Activated CD4-positive, alpha-beta T cell treated with anti-CD3 and anti-CD28 coated beads for 36 hours (primary cell): ENCODE measurements at regions of chr11 and their contacts with region 1.

Region 1: DNA sequence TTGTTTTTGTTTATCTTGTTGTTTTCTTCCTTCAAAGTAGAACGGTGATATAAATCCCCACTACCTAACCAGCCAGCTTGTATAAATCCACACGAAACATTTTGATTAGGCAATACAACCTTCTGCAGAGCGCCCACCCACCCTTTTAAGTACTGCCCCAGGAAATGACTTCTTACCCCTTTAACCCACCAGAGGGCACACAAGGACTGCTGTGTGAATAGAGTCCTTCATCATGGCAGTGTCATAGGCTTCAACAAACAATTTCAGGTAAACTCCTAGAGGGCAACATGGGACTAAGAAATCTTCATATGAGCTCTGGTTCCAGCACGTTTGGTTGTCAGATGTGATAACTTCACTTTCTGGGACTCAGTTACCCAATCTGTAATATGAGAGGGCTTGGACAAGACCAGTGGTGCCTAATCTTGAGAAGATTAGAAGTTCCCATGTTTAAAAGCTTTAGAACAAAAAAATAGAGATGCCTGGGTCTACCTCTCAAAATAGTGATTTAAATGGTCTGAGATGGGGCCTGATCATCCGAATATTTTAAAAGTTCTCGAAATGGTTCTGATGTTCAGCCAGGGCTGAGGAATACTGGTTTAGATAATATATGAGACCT is 56.1 kb downstream of the PIWIL4 start:
- DNase-seq: peak; percentile 70
- ATAC-seq: peak; percentile 93
- H3K4me3 Mint-ChIP-seq: no peak overlapping the region
- H3K27ac Mint-ChIP-seq: no peak overlapping the region
- H3K4me1 Mint-ChIP-seq: peaks cover 2% of the 10 kb centered on the region
- H3K27me3 Mint-ChIP-seq: peaks cover 2% of the 10 kb centered on the region

Region 2: GRCh38 chr11:94613120-94613519 is 10.1 kb before region 1 on chr11:
- CTCF ChIA-PET with region 1: interaction called, 12 read pairs
- POLR2A ChIA-PET with region 1: no interaction called
- intact Hi-C with region 1: no loop called
- DNase-seq: no peak
- ATAC-seq: no peak
- H3K4me3 Mint-ChIP-seq: no peak overlapping the region
- H3K27ac Mint-ChIP-seq: no peak overlapping the region
- H3K4me1 Mint-ChIP-seq: no peaks in the 10 kb centered on the region
- H3K27me3 Mint-ChIP-seq: no peaks in the 10 kb centered on the region

Region 3: DNA sequence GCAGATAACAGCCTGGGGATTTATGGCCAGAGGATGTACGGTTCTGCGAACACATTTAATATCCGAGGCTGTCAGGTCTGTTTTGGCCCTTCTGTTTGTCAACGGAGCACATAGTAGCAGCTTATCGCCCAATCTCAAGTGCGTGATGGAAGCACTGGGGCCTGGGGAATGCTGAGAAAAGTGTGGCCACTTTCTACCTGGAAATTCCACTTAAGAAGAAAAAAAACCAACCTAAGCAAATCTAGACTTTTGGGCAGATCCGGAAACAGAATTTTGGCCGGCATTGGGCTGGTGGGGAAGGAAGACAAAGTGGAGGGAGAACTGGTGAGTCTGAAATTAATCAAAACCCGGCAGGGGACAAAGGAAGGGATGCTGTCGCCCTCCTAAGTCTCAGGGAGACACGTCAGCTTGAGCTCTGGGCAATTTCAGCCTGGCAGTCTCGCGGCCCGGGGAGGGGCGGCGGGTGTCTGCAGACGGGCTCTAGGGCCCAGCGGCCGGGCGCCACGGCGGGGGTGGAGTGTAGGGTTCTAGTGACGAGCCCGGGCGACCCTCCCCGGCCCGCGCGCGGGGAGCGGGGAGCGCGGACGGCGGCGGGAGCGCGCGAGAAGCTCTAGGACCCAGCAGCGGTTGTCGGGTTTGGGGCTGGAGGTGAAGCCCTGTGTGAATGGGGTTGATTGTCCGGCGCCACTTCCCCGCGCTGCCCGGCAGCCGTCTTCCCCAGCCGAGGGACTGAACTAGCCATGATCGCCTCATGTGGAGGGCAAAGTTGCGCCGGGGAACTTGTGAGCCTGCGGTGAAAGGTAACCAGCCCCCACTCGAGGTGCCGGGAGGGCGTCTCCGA is 144.8 kb after region 1 on chr11 and contains the start of gene AMOTL1:
- CTCF ChIA-PET with region 1: no interaction called
- POLR2A ChIA-PET with region 1: no interaction called
- intact Hi-C with region 1: loop called in 1 of 2 experiments (anchors 5 kb)
- DNase-seq: peak; percentile 69
- ATAC-seq: peak; percentile 73
- H3K4me3 Mint-ChIP-seq: peak within 1 kb of the TSS; percentile 65
- H3K27ac Mint-ChIP-seq: no peak within 1 kb of the TSS
- H3K4me1 Mint-ChIP-seq: peaks cover 11% of the 10 kb centered on the region
- H3K27me3 Mint-ChIP-seq: peaks cover 31% of the 10 kb centered on the region
- total RNA-seq, gene AMOTL1: 1.8 to 2.3 TPM

Region 4: GRCh38 chr11:94973099-94973968 is 350.1 kb after region 1 on chr11 and contains the starts of genes CWC15 and KDM4D:
- CTCF ChIA-PET with region 1: no interaction called
- POLR2A ChIA-PET with region 1: no interaction called
- intact Hi-C with region 1: loop called in 1 of 2 experiments (anchors 2 kb)
- DNase-seq: peak; percentile 97
- ATAC-seq: peak; percentile 99
- H3K4me3 Mint-ChIP-seq: peak within 1 kb of the TSS; percentile 84
- H3K27ac Mint-ChIP-seq: peak within 1 kb of the TSS; percentile 94
- H3K4me1 Mint-ChIP-seq: peaks cover 27% of the 10 kb centered on the region
- H3K27me3 Mint-ChIP-seq: no peaks in the 10 kb centered on the region
- total RNA-seq, gene CWC15: 74.7 to 85.0 TPM
- total RNA-seq, gene KDM4D: 1.5 to 1.8 TPM

Region 5: GRCh38 chr11:96424693-96425092 is 1801.5 kb after region 1 on chr11:
- CTCF ChIA-PET with region 1: no interaction called
- POLR2A ChIA-PET with region 1: no interaction called
- intact Hi-C with region 1: loop called in 1 of 2 experiments (anchors 5 kb)
- DNase-seq: no peak
- ATAC-seq: peak; percentile 80
- H3K4me3 Mint-ChIP-seq: no peak overlapping the region
- H3K27ac Mint-ChIP-seq: no peak overlapping the region
- H3K4me1 Mint-ChIP-seq: peaks cover 14% of the 10 kb centered on the region
- H3K27me3 Mint-ChIP-seq: peaks cover 28% of the 10 kb centered on the region